ENCODE measurements at regions of chr1 and their contacts with region 1.

Region 1: GRCh38 chr1:198681831-198682759 is 43.3 kb downstream of the PTPRC start:
- DNase-seq: peak; percentile 63 to 96
- ATAC-seq: peak; percentile 66 to 93 (median 86)
- H3K4me3 ChIP-seq: peak overlapping the region; percentile 21
- H3K4me3 Mint-ChIP-seq: peak overlapping the region; percentile 78
- H3K27ac ChIP-seq: peak overlapping the region; percentile 90
- H3K27ac Mint-ChIP-seq: peak overlapping the region; percentile 88 to 90
- H3K4me1 ChIP-seq: peaks cover 27% of the 10 kb centered on the region
- H3K4me1 Mint-ChIP-seq: peaks cover 82 to 83% of the 10 kb centered on the region in 2 donors
- H3K27me3 ChIP-seq: no peaks in the 10 kb centered on the region
- H3K27me3 Mint-ChIP-seq: no peaks in the 10 kb centered on the region
- CTCF ChIP-seq: no peak

Region 2: DNA sequence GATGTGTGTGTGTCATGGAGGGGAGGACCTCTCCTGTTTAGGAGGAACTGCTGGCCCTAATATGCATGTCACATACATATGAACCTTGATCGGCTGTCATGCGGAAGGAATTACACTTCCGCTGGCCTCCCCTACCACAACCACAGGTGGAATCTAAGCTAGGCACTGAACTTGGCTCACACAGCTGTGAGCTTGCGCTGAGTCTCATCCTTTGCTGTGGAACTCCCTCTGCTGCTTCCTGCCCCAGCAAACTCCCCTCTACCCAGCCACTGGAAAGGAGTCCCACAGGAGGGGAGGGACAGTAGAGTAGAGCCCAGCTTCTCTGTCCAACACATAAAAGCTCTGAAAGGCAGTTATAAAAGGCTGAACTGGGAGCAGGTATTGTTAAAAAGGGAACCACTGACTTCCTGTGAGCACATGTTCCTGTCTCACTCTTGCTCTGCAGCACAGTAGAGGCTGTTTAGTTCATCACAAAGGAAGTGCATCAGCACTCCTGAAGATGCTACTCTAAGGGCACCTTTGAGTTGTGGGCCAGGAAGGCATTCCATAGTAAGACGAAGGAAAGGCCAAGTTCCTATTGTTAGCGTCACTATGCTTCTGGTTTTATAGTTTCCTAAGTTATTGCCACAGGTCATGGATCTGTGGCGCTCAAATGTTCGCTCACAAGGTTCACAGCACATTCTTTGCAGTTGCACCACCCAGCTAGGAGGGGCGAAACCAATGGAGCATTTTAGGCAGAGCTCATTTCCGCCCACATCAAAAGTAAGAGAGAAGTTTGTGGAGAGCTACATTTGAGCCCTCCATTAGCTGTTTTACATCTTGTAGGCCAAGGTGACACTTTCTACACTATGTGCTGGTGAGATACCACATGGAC is 60.9 kb before region 1 on chr1:
- intact Hi-C with region 1: loop called (anchors 1 kb)
- DNase-seq: peak; percentile 53 to 86
- ATAC-seq: peak; percentile 70 to 87 (median 83)
- H3K4me3 ChIP-seq: peak overlapping the region; percentile 16
- H3K4me3 Mint-ChIP-seq: peak overlapping the region; percentile 95
- H3K27ac ChIP-seq: peak overlapping the region; percentile 94
- H3K27ac Mint-ChIP-seq: peak overlapping the region; percentile 91 to 99
- H3K4me1 ChIP-seq: peaks cover 54% of the 10 kb centered on the region
- H3K4me1 Mint-ChIP-seq: peaks cover 78 to 81% of the 10 kb centered on the region in 2 donors
- H3K27me3 ChIP-seq: no peaks in the 10 kb centered on the region
- H3K27me3 Mint-ChIP-seq: no peaks in the 10 kb centered on the region
- CTCF ChIP-seq: no peak

Region 3: DNA sequence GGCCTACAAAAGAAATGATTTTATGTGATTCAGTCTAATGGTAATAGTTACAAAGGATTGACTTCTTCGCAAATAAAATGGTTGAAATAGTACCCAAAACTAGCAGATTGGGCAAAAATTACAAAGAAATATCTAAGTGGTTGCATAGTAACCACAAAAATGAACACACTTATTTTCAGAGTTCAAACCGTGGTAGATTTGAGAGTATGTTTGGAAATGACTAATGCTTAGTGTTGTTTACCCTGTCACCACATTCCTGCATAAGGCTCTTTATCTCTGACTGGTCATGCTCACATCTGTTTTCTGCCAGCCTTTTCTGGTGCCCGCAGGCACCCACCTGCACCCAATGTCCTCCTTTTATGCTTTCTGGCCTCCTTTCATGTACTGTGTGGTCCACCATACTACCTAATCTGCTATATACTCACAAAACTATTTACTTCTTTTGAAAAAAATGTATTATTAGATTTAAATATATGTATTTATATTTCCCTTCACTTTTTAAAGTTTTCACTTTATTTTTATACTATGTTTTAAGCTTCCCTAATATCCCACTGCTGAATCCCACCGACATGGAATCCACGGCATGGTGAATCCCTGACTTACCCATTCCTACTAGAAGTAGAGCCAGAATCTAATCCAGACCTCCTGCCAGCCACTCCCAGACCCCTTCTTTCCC is 12.9 kb before region 1 on chr1:
- intact Hi-C with region 1: loop called (anchors 1 kb)
- DNase-seq: peak; percentile 55 to 78
- ATAC-seq: peak; percentile 81 to 89 (median 87)
- H3K4me3 ChIP-seq: no peak overlapping the region
- H3K4me3 Mint-ChIP-seq: peak overlapping the region; percentile 70
- H3K27ac ChIP-seq: peak overlapping the region; percentile 86
- H3K27ac Mint-ChIP-seq: peak overlapping the region; percentile 88 to 90
- H3K4me1 ChIP-seq: peaks cover 35% of the 10 kb centered on the region
- H3K4me1 Mint-ChIP-seq: peaks cover 82 to 83% of the 10 kb centered on the region in 2 donors
- H3K27me3 ChIP-seq: no peaks in the 10 kb centered on the region
- H3K27me3 Mint-ChIP-seq: no peaks in the 10 kb centered on the region
- CTCF ChIP-seq: no peak

Region 4: GRCh38 chr1:198713081-198713480 is 31.0 kb after region 1 on chr1:
- intact Hi-C with region 1: no loop called
- DNase-seq: no peak
- ATAC-seq: no peak
- H3K4me3 ChIP-seq: no peak overlapping the region
- H3K4me3 Mint-ChIP-seq: no peak overlapping the region
- H3K27ac ChIP-seq: no peak overlapping the region
- H3K27ac Mint-ChIP-seq: peak overlapping the region; percentile 82 to 84
- H3K4me1 ChIP-seq: no peaks in the 10 kb centered on the region
- H3K4me1 Mint-ChIP-seq: peaks cover 34 to 52% of the 10 kb centered on the region in 2 donors
- H3K27me3 ChIP-seq: no peaks in the 10 kb centered on the region
- H3K27me3 Mint-ChIP-seq: no peaks in the 10 kb centered on the region
- CTCF ChIP-seq: no peak